ENCODE measurements at regions of chr4 and their contacts with region 1.

Region 1: DNA sequence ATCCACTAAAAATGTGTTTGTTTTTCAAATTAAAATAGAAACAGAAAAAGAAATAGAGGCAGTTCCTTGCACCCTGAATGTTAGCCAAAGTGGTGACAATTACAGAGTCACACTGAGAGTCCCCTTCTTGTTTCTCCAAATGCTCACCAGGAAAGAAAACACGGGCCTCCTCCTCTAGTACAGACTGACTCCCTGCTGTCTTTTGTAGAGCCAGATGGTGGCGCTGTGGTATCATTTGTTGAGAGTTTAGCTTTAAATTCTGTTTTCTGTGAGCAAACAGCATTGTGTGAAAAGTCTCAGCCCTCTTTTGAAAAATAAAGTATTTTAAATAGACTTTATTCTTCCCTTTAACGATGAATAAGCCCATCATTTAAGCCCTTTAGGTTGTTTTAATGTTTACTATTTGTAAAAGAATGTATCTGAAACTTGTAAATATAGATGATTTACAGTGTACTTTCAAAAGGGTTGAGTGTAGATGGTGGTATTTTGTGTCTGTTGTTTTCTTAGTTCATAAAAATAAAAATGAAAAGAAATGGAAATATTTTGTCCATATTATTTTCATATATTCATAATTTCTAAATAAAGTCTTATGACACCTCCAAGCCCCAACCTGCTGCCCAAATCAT is 36.9 kb upstream of the ATOH1 start:
- DNase-seq: peak; percentile 81
- H3K4me3 Mint-ChIP-seq: no peak overlapping the region
- H3K27ac Mint-ChIP-seq: no peak overlapping the region
- H3K4me1 Mint-ChIP-seq: no peaks in the 10 kb centered on the region
- H3K27me3 Mint-ChIP-seq: no peaks in the 10 kb centered on the region
- CTCF ChIP-seq: peak; percentile 84

Region 2: DNA sequence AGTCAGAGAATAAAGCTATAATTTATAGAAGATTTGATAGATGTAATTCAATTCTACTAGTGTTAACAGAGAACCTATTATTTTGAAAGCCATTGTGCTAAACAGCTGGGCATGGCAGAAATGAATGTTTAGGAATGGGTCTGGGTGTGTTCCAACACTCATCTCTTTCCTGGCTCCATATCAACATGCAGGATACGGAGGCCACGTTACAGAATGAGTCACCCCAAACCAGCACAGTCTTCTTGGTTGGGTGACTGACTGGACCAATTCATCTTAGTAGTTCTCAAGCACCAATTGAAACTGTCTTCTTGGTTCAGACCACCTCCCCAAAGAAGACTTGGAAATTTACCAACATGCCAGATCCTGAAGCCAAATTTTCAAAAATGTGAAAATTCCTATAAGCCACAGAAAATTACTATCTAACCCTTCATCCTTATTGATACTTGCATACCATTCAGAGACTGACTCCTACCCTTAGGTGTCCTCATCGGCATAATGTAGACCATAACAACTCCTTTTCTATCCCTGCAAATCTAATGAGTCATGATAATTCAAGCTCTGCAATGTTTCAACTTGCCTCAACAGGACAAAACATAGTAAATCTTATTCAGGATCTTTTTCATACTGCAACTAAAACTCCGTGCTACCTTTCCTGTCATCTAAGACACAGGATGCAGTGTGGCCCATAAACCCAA is 15.2 kb before region 1 on chr4:
- CTCF ChIA-PET with region 1: interaction called, 25 read pairs
- POLR2A ChIA-PET with region 1: no interaction called
- intact Hi-C with region 1: no loop called
- DNase-seq: peak; percentile 89
- H3K4me3 Mint-ChIP-seq: no peak overlapping the region
- H3K27ac Mint-ChIP-seq: peak overlapping the region; percentile 55
- H3K4me1 Mint-ChIP-seq: peaks cover 11% of the 10 kb centered on the region
- H3K27me3 Mint-ChIP-seq: no peaks in the 10 kb centered on the region
- CTCF ChIP-seq: no peak

Region 3: GRCh38 chr4:94127707-94128328 is 336.1 kb after region 1 on chr4:
- CTCF ChIA-PET with region 1: interaction called, 35 read pairs
- POLR2A ChIA-PET with region 1: interaction called, 5 read pairs
- intact Hi-C with region 1: loop called (anchors 1 kb)
- DNase-seq: peak; percentile 72
- H3K4me3 Mint-ChIP-seq: no peak overlapping the region
- H3K27ac Mint-ChIP-seq: no peak overlapping the region
- H3K4me1 Mint-ChIP-seq: no peaks in the 10 kb centered on the region
- H3K27me3 Mint-ChIP-seq: no peaks in the 10 kb centered on the region
- CTCF ChIP-seq: peak; percentile 58

Region 4: GRCh38 chr4:94256828-94257227 is 465.1 kb after region 1 on chr4:
- CTCF ChIA-PET with region 1: no interaction called
- POLR2A ChIA-PET with region 1: no interaction called
- intact Hi-C with region 1: loop called (anchors 1 kb)
- DNase-seq: peak; percentile 13
- H3K4me3 Mint-ChIP-seq: no peak overlapping the region
- H3K27ac Mint-ChIP-seq: no peak overlapping the region
- H3K4me1 Mint-ChIP-seq: peaks cover 2% of the 10 kb centered on the region
- H3K27me3 Mint-ChIP-seq: no peaks in the 10 kb centered on the region
- CTCF ChIP-seq: peak; percentile 24

Region 5: GRCh38 chr4:94390804-94391410 is 599.2 kb after region 1 on chr4:
- CTCF ChIA-PET with region 1: interaction called, 4 read pairs
- POLR2A ChIA-PET with region 1: no interaction called
- intact Hi-C with region 1: loop called (anchors 1 kb)
- DNase-seq: peak; percentile 41
- H3K4me3 Mint-ChIP-seq: no peak overlapping the region
- H3K27ac Mint-ChIP-seq: no peak overlapping the region
- H3K4me1 Mint-ChIP-seq: peaks cover 5% of the 10 kb centered on the region
- H3K27me3 Mint-ChIP-seq: peaks cover 22% of the 10 kb centered on the region
- CTCF ChIP-seq: peak; percentile 49

Region 6: DNA sequence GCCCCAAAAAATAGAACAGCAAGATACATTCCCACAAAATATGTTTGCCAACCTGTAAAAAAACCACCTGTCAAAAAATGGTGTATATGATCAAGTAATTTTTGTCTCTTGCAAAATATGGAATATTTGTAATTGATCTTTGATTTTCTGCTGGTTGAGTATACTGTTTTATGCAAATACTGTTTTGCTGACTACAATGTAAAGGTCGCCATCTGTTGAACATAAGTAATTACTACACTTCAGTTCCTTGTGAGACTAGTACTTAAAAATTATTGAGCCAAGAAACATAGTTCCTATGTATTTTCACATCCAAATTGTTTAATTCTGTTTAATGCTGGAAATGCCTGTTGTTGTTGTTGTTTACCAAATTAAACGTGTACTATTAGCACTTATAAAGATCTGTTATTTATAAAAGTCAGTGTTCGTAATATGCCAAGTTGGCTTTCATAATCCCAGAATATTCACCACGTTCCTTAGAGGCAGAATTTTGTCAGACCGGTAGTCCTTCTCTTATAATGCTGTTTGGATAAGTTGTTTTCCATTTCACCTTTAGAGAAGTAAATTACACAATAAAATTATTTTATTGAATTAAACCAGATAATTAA is 804.3 kb after region 1 on chr4:
- CTCF ChIA-PET with region 1: no interaction called
- POLR2A ChIA-PET with region 1: no interaction called
- intact Hi-C with region 1: loop called (anchors 10 kb)
- DNase-seq: peak; percentile 63
- H3K4me3 Mint-ChIP-seq: no peak overlapping the region
- H3K27ac Mint-ChIP-seq: no peak overlapping the region
- H3K4me1 Mint-ChIP-seq: peaks cover 5% of the 10 kb centered on the region
- H3K27me3 Mint-ChIP-seq: no peaks in the 10 kb centered on the region
- CTCF ChIP-seq: peak; percentile 66

Measured in MCF 10A (cell line).